BJ (cell line): ENCODE measurements at regions of chr5 and their contacts with region 1.

Region 1: DNA sequence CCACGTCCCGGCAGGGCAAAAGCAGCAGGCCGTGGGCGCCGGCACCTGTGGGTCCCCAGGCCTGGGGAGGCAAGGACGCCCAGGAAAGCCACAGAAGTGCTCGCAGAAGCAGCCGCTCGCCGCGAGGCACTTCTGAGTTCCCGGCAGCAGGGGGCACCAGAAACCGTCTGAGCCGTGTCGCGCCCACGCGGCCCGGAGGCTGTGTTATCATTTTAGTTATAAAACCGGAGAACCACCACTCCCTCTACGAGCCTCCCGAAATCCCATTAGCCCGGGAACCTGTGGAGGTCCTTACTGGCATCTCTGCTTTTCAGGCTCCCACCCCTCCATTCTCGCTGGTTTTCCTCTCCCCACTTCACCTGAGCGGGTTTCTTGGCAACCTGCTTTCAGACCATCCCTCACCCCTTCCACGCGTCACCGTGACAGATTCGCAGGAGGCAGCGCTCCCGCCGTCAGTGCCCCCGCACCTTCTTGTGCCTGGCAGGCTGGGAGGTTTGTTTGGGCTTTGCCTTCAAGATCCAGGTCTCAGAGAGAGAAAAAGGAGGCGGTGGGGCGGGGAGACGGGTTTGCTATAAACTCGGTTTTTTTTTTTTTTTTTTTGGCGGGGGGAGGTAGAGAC is 2.3 kb downstream of the GDNF start:
- DNase-seq: no peak
- H3K4me3 ChIP-seq: peak overlapping the region; percentile 62
- H3K27me3 ChIP-seq: peaks cover 2% of the 10 kb centered on the region; the same call in 1 of the 2 replicates
- CTCF ChIP-seq: peak; percentile 89

Region 2: DNA sequence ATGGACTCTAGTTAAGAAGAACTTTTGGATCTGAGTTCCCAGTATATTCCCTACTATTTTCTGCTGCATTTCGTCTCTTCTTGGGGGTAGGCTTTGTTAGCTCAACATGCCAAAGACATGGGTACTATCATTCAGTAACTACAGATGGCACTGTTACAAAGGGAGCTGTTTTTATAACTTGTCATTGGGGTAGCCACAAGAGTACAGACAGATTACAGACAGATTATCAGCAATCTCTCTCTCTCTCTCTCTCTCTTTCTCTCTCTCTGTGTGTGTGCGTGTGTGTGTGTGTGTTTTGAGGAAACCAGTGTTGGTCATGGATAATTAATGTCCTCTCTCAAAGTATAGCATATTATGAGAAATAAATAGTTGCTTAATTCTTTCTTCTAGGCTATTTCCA is 342.3 kb before region 1 on chr5:
- CTCF ChIA-PET with region 1: interaction called, 3 read pairs
- POLR2A ChIA-PET with region 1: interaction called, 13 read pairs
- DNase-seq: no peak
- H3K4me3 ChIP-seq: no peak overlapping the region
- H3K27me3 ChIP-seq: no peaks in the 10 kb centered on the region
- CTCF ChIP-seq: 0 out of 2 replicates have a peak, but pooled peaks have one; percentile 23

Region 3: GRCh38 chr5:37774912-37775483 is 62.5 kb before region 1 on chr5:
- CTCF ChIA-PET with region 1: interaction called, 10 read pairs
- POLR2A ChIA-PET with region 1: interaction called, 3 read pairs
- DNase-seq: no peak
- H3K4me3 ChIP-seq: no peak overlapping the region
- H3K27me3 ChIP-seq: no peaks in the 10 kb centered on the region
- CTCF ChIP-seq: peak; percentile 78

Region 4: GRCh38 chr5:37875051-37875787 is 37.7 kb after region 1 on chr5:
- CTCF ChIA-PET with region 1: interaction called, 4 read pairs
- POLR2A ChIA-PET with region 1: interaction called, 11 read pairs
- DNase-seq: peak; percentile 52
- H3K4me3 ChIP-seq: no peak overlapping the region
- H3K27me3 ChIP-seq: no peaks in the 10 kb centered on the region
- CTCF ChIP-seq: no peak

Region 5: GRCh38 chr5:37957239-37957638 is 119.7 kb after region 1 on chr5:
- CTCF ChIA-PET with region 1: no interaction called
- POLR2A ChIA-PET with region 1: no interaction called
- DNase-seq: no peak
- H3K4me3 ChIP-seq: no peak overlapping the region
- H3K27me3 ChIP-seq: no peaks in the 10 kb centered on the region
- CTCF ChIP-seq: no peak

Region 6: GRCh38 chr5:39177631-39177964 is 1340.1 kb after region 1 on chr5:
- CTCF ChIA-PET with region 1: no interaction called
- POLR2A ChIA-PET with region 1: no interaction called
- DNase-seq: no peak
- H3K4me3 ChIP-seq: no peak overlapping the region
- H3K27me3 ChIP-seq: no peaks in the 10 kb centered on the region; the same call in 1 of the 2 replicates
- CTCF ChIP-seq: no peak